Heart left ventricle (tissue), 16 donors: ENCODE measurements at regions of chr12 and their contacts with region 1.

Region 1: GRCh38 chr12:92551853-92552397 is 150.9 kb upstream of the PLEKHG7 start:
- DNase-seq: no peak
- ATAC-seq: no peak
- H3K4me3 ChIP-seq: no peak overlapping the region
- H3K27ac ChIP-seq: peak overlapping the region in 8 of 12 donors; percentile 63 to 90 (median 84)
- H3K4me1 ChIP-seq: peaks cover 0 to 55% (median 28%) of the 10 kb centered on the region in 12 donors
- H3K27me3 ChIP-seq: no peaks in the 10 kb centered on the region
- CTCF ChIP-seq: no peak
- POLR2A ChIP-seq: no peak

Region 2: DNA sequence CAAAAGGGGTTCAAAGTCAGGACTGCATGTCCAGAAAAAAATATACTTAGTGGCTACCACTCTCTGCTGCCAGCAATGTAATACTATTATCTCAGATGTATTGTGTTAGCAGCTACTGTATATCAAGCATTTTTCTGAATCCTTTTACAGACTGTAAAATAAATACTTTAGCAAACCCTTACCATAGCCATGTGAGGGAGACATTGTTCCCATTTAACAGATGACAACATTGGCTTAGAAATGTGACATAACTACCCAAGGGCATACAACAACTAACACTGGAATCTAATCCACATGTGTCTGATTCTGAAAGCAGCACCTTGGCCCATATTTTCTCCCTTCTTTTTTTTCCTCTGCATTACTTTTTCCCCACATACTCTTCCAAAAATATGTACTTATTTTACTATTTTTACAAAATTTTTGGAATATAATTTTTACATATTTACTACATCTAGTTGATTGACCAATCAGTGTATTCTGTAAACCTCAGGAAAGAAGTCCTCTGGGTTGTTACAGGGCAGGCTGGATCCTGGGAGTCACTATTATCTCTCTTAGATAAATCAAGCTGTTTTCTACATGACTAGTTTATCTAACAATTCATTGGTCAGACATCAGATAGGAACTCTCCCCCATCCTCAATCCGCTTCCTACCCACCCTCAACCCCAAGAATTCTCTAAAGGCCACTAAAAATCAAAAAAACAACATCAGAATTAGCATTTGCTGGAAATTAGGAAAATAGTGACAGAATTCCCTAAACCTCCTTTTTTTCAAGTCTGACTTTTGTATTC is 560.3 kb before region 1 on chr12:
- intact Hi-C with region 1: loop called in 1 of 10 experiments (anchors 10 kb)
- DNase-seq: no peak
- ATAC-seq: no peak
- H3K4me3 ChIP-seq: no peak overlapping the region
- H3K27ac ChIP-seq: peak overlapping the region in 3 of 12 donors; percentile 0 to 39 (median 0)
- H3K4me1 ChIP-seq: peaks cover 0 to 37% (median 12%) of the 10 kb centered on the region in 12 donors
- H3K27me3 ChIP-seq: no peaks in the 10 kb centered on the region
- CTCF ChIP-seq: no peak
- POLR2A ChIP-seq: no peak

Region 3: GRCh38 chr12:92408072-92408900 is 143.6 kb before region 1 on chr12:
- intact Hi-C with region 1: loop called in 3 of 10 experiments (anchors 10 kb)
- DNase-seq: peak in 2 of 5 donors; percentile 57 to 63
- ATAC-seq: peak; percentile 49 to 94 (median 78)
- H3K4me3 ChIP-seq: no peak overlapping the region
- H3K27ac ChIP-seq: no peak overlapping the region
- H3K4me1 ChIP-seq: peaks cover 0 to 38% (median 7%) of the 10 kb centered on the region in 12 donors
- H3K27me3 ChIP-seq: no peaks in the 10 kb centered on the region
- CTCF ChIP-seq: peak in 7 of 12 donors; percentile 13 to 52 (median 34)
- POLR2A ChIP-seq: no peak

Region 4: DNA sequence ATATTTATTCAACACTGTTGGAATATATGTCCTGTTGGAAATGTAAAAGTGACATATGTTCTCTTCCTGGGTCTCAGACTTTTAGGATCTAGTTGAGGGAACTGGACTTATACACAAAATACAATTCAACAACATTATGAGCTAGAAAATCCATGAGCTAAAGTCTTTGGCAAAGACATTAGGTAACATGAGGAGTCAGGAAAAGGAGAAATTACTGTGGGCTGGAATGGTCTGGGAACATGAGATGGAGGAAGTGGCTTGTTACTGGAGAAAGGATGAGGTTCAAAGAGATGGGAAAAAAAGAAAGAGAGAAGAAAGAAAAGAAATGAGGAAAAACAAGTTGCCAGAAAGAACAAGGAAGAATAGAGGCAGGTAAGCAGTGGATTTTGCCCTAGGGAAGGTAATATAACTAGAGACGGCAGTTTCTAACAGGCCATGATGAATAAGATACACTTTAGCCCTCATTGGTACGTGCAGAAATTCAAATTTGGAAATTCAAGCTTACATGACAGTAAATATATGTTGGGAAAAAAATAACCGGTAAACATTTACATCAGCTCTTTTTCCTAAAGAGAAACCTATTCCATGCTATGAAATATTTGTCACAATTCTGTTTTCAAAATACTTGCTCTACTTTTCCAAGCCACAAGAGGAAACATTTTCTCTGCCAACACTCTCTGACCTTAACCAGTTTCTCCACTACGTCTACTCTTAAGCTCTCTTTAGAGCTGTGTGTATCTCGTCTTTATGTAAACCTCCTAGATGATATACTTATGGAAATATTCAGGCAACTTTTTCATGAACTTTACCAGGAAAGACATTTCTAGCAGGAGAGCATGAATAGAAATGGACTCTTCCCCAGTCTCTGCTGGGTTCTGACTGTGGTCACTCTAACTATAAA is 137.5 kb before region 1 on chr12:
- intact Hi-C with region 1: loop called in 3 of 10 experiments (anchors 10 kb)
- DNase-seq: no peak
- ATAC-seq: no peak
- H3K4me3 ChIP-seq: no peak overlapping the region
- H3K27ac ChIP-seq: peak overlapping the region in 3 of 12 donors; percentile 1 to 14 (median 8)
- H3K4me1 ChIP-seq: peaks cover 0 to 40% (median 12%) of the 10 kb centered on the region in 12 donors
- H3K27me3 ChIP-seq: no peaks in the 10 kb centered on the region
- CTCF ChIP-seq: peak in 1 of 12 donors; percentile 12
- POLR2A ChIP-seq: no peak

Region 5: GRCh38 chr12:92505254-92506231 is 46.4 kb before region 1 on chr12:
- intact Hi-C with region 1: loop called in 1 of 10 experiments (anchors 5 kb)
- DNase-seq: peak; percentile 67 to 81 (median 70)
- ATAC-seq: peak; percentile 71 to 87 (median 80)
- H3K4me3 ChIP-seq: peak overlapping the region in 10 of 12 donors; percentile 11 to 40 (median 26)
- H3K27ac ChIP-seq: peak overlapping the region; percentile 55 to 96 (median 85)
- H3K4me1 ChIP-seq: peaks cover 5 to 59% (median 38%) of the 10 kb centered on the region in 12 donors
- H3K27me3 ChIP-seq: no peaks in the 10 kb centered on the region
- CTCF ChIP-seq: no peak
- POLR2A ChIP-seq: no peak